ENCODE measurements at regions of chr10 and their contacts with region 1.

Region 1: GRCh38 chr10:79374312-79375191 is 27.3 kb downstream of the PPIF start:
- ATAC-seq: peak; percentile 68 to 89 (median 76)
- H3K4me3 ChIP-seq: no peak overlapping the region
- H3K27ac ChIP-seq: no peak overlapping the region
- H3K4me1 ChIP-seq: peaks cover 0 to 4% of the 10 kb centered on the region in 2 donors

Region 2: GRCh38 chr10:79454259-79454658 is 79.7 kb after region 1 on chr10:
- in situ Hi-C with region 1: loop called in 2 of 9 experiments (anchors 25 kb)
- ATAC-seq: peak in 3 of 8 experiments; percentile 40 to 92 (median 86)
- H3K4me3 ChIP-seq: no peak overlapping the region
- H3K27ac ChIP-seq: no peak overlapping the region
- H3K4me1 ChIP-seq: no peaks in the 10 kb centered on the region